A549 (cell line): ENCODE measurements at regions of chr9 and their contacts with region 1.

Region 1: GRCh38 chr9:113511856-113512761 is 48.6 kb downstream of the RGS3 start:
- DNase-seq: no peak
- ATAC-seq: no peak
- H3K4me3 ChIP-seq: no peak overlapping the region
- H3K27ac ChIP-seq: no peak overlapping the region
- H3K4me1 ChIP-seq: peaks cover 19% of the 10 kb centered on the region; the same call in 2 of the 3 replicates
- CTCF ChIP-seq: no peak
- EP300 ChIP-seq: no peak
- POLR2A ChIP-seq: no peak
- RAD21 ChIP-seq: no peak

Region 2: GRCh38 chr9:113523421-113524236 is 11.5 kb after region 1 on chr9:
- CTCF ChIA-PET with region 1: interaction called, 11 read pairs
- POLR2A ChIA-PET with region 1: no interaction called
- DNase-seq: no peak
- ATAC-seq: no peak
- H3K4me3 ChIP-seq: no peak overlapping the region
- H3K27ac ChIP-seq: no peak overlapping the region
- H3K4me1 ChIP-seq: peaks cover 36% of the 10 kb centered on the region
- CTCF ChIP-seq: no peak
- EP300 ChIP-seq: no peak
- POLR2A ChIP-seq: no peak
- RAD21 ChIP-seq: no peak

Region 3: GRCh38 chr9:113682297-113682771 is 170.2 kb after region 1 on chr9:
- CTCF ChIA-PET with region 1: no interaction called
- POLR2A ChIA-PET with region 1: no interaction called
- DNase-seq: peak; percentile 84 to 94
- ATAC-seq: peak; percentile 83 to 95
- H3K4me3 ChIP-seq: no peak overlapping the region
- H3K27ac ChIP-seq: peak overlapping the region; percentile 51 to 63
- H3K4me1 ChIP-seq: peaks cover 6% of the 10 kb centered on the region; the same call in 2 of the 3 replicates
- CTCF ChIP-seq: peak; percentile 93
- EP300 ChIP-seq: no peak
- POLR2A ChIP-seq: no peak
- RAD21 ChIP-seq: peak; percentile 77 to 81

Region 4: GRCh38 chr9:114059047-114059803 is 547.1 kb after region 1 on chr9:
- CTCF ChIA-PET with region 1: no interaction called
- POLR2A ChIA-PET with region 1: no interaction called
- DNase-seq: no peak
- ATAC-seq: peak in 1 of 2 experiments; percentile 35; a peak in 3 of 6 replicates
- H3K4me3 ChIP-seq: no peak overlapping the region
- H3K27ac ChIP-seq: no peak overlapping the region
- H3K4me1 ChIP-seq: no peaks in the 10 kb centered on the region
- CTCF ChIP-seq: no peak
- EP300 ChIP-seq: no peak
- POLR2A ChIP-seq: no peak
- RAD21 ChIP-seq: no peak